HepG2 (cell line): ENCODE measurements at regions of chr3 and their contacts with region 1.

Region 1: GRCh38 chr3:146189519-146190173 is 28.7 kb upstream of the PLOD2 start:
- DNase-seq: peak; percentile 49
- ATAC-seq: peak; percentile 94
- H3K4me3 ChIP-seq: no peak overlapping the region
- H3K27ac ChIP-seq: no peak overlapping the region
- H3K4me1 ChIP-seq: no peaks in the 10 kb centered on the region
- H3K27me3 ChIP-seq: no peaks in the 10 kb centered on the region
- CTCF ChIP-seq: peak; percentile 80
- EP300 ChIP-seq: no peak
- POLR2A ChIP-seq: no peak
- RAD21 ChIP-seq: peak; percentile 56

Region 2: GRCh38 chr3:145776782-145777408 is 412.8 kb before region 1 on chr3:
- CTCF ChIA-PET with region 1: no interaction called
- POLR2A ChIA-PET with region 1: no interaction called
- in situ Hi-C with region 1: loop called (anchors 25 kb)
- intact Hi-C with region 1: loop called (anchors 2 kb)
- DNase-seq: peak; percentile 47
- ATAC-seq: peak; percentile 77
- H3K4me3 ChIP-seq: no peak overlapping the region
- H3K27ac ChIP-seq: no peak overlapping the region
- H3K4me1 ChIP-seq: no peaks in the 10 kb centered on the region
- H3K27me3 ChIP-seq: no peaks in the 10 kb centered on the region
- CTCF ChIP-seq: peak; percentile 72
- EP300 ChIP-seq: no peak
- POLR2A ChIP-seq: no peak
- RAD21 ChIP-seq: no peak

Region 3: GRCh38 chr3:146065573-146066006 is 124.1 kb before region 1 on chr3:
- CTCF ChIA-PET with region 1: interaction called, 24 read pairs
- POLR2A ChIA-PET with region 1: no interaction called
- in situ Hi-C with region 1: no loop called
- intact Hi-C with region 1: loop called (anchors 1 kb)
- DNase-seq: peak; percentile 50
- ATAC-seq: no peak
- H3K4me3 ChIP-seq: no peak overlapping the region
- H3K27ac ChIP-seq: no peak overlapping the region
- H3K4me1 ChIP-seq: no peaks in the 10 kb centered on the region
- H3K27me3 ChIP-seq: no peaks in the 10 kb centered on the region; a peak in 1 of 5 replicates
- CTCF ChIP-seq: peak; percentile 49
- EP300 ChIP-seq: no peak
- POLR2A ChIP-seq: no peak
- RAD21 ChIP-seq: no peak

Region 4: DNA sequence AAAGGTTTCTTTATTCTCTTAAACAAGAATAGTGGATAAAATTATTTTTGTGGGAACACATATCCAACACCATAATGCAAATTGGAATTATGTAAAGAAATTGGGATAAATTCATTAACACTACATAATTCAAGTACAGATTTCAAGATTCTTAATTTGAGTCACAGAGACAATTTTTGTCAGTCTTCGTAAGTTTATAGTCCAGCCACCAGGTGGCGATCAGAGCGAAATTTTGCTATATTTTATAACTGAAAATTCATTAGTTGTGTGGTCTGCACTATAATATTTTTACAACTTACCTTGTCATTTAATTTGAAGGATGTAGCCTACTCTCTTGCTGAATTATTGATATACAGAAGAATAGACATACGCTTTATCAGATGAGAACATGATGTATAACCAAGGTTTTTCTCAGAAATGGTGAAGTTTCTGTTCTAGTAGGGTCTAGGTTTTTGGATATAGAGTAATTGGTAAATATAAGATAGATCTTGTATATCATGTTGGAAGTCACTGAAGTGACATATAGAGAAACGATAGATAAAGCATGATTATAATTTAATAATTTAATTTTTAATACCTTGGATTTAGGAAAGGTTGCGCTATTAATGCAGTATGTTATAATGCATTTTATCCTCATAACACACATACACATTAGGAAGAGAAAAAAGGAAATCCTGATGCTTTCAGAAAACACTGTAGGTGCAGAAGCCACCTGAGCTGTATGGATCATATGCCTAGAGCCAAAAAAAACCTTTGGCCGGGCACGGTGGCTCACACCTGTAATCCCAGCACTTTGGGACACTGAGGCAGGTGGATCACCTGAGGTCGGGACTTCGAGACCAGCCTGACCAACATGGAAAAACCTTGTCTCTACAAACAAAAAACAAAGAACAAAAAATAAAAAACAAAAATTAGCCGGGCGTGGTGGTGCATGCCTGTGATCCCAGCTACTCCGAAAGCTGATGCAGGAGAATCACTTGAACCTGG is 29.5 kb after region 1 on chr3:
- CTCF ChIA-PET with region 1: no interaction called
- POLR2A ChIA-PET with region 1: interaction called, 5 read pairs
- in situ Hi-C with region 1: no loop called
- intact Hi-C with region 1: loop called (anchors 1 kb)
- DNase-seq: peak; percentile 6
- ATAC-seq: no peak
- H3K4me3 ChIP-seq: no peak overlapping the region; a peak in 2 of 6 replicates
- H3K27ac ChIP-seq: no peak overlapping the region
- H3K4me1 ChIP-seq: peaks cover 45% of the 10 kb centered on the region
- H3K27me3 ChIP-seq: no peaks in the 10 kb centered on the region
- CTCF ChIP-seq: peak; percentile 54
- EP300 ChIP-seq: no peak
- POLR2A ChIP-seq: no peak
- RAD21 ChIP-seq: no peak; the same call in 1 of the 2 replicates

Region 5: GRCh38 chr3:146374146-146374545 is 184.5 kb after region 1 on chr3:
- CTCF ChIA-PET with region 1: no interaction called
- POLR2A ChIA-PET with region 1: no interaction called
- in situ Hi-C with region 1: no loop called
- intact Hi-C with region 1: no loop called
- DNase-seq: no peak
- ATAC-seq: no peak
- H3K4me3 ChIP-seq: no peak overlapping the region
- H3K27ac ChIP-seq: no peak overlapping the region
- H3K4me1 ChIP-seq: no peaks in the 10 kb centered on the region
- H3K27me3 ChIP-seq: no peaks in the 10 kb centered on the region
- CTCF ChIP-seq: no peak
- EP300 ChIP-seq: no peak
- POLR2A ChIP-seq: no peak
- RAD21 ChIP-seq: no peak